Activated CD4-positive, alpha-beta T cell treated with anti-CD3 and anti-CD28 coated beads, Interleukin-2, amount 10 ng/mL, durations not matched to agents 24 days and 14 days (primary cell): ENCODE measurements at regions of chr15 and their contacts with region 1.

Region 1: GRCh38 chr15:60389261-60390077 is 8.3 kb downstream of the ANXA2 start:
- DNase-seq: peak; percentile 89
- H3K4me3 Mint-ChIP-seq: peak overlapping the region; percentile 37
- H3K27ac Mint-ChIP-seq: peak overlapping the region; percentile 51
- H3K4me1 Mint-ChIP-seq: peaks cover 64% of the 10 kb centered on the region
- H3K27me3 Mint-ChIP-seq: no peaks in the 10 kb centered on the region

Region 2: DNA sequence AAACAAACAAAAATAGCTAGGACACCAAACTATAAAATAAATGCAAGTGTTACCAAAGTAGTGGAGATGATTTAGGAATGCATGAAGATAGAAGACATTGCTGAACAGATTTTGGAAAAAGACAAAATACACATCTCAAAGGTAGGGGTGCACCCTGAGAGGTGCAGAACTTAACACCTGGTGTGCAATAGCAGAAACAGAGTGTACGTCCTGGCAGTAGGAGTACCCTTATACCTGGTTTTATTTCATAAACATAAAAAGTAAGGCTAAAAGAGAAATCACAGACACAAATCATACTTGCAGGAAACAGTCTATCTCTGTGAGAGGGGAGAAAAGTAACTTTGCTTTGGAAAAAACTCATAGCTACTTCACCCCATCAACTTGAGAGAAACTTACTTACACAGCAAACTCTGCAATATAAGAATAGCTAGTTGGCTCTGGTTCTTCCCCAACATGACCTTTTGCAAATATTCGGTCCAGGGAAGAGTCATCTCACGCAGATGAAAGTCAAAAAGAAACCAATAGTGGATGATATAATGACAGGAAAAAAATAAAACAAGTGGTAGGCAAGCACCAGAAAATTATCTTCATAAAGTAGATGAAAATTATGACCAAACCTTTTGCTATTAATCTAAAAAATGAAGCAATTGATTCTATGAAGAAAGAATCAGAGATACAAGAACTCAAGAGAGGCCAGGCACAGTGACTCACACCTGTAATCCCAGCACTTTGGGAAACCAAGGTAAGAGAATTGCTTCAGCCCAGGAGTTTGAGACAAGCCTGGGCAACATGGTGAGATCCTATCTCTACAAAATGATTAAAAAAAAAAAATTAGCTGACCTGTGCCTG is 591.5 kb before region 1 on chr15:
- intact Hi-C with region 1: loop called (anchors 1 kb)
- DNase-seq: peak; percentile 61
- H3K4me3 Mint-ChIP-seq: peak overlapping the region; percentile 47
- H3K27ac Mint-ChIP-seq: peak overlapping the region; percentile 67
- H3K4me1 Mint-ChIP-seq: peaks cover 46% of the 10 kb centered on the region
- H3K27me3 Mint-ChIP-seq: peaks cover 22% of the 10 kb centered on the region

Region 3: GRCh38 chr15:60370869-60371700 is 18.4 kb before region 1 on chr15:
- intact Hi-C with region 1: loop called (anchors 2 kb)
- DNase-seq: no peak
- H3K4me3 Mint-ChIP-seq: peak overlapping the region; percentile 41
- H3K27ac Mint-ChIP-seq: peak overlapping the region; percentile 97
- H3K4me1 Mint-ChIP-seq: peaks cover 26% of the 10 kb centered on the region
- H3K27me3 Mint-ChIP-seq: no peaks in the 10 kb centered on the region

Region 4: DNA sequence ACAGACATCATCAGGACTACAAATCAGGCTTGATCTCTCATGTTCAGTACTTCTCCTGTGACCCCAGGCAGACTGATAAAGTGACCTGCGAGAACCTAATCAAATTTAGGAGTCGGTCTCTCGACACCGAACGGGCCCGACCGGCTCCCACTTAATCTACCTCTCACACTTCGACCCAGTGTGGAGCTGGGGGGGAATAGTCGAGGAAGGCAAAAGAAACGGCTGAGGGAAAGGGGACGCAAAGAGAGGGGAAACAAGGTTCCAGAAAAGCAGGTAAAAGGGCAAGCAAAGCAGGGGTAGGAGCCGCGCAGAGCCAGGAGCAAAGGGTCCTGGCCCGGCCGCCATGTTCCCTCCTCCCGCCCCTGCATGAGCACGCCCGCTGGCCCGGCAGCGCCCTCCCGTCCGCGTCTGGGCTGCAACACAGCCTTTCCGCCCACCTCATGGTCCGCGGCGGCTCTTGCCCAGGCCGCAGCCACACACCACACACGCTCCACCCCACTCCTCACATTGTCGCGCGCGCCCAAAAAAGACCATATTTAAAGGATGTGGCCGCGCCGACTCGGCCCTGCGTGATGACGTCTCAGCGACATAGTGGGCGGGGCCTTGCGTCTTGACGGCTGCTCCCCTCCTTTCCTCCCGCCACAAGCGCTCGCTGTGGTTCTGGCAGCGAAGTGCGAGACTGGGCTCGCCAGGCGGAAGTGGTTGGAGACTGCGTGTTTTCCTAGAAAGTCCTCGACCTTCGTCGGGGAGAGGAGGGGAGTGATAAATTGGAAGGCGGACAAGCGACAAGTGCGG is 89.3 kb after region 1 on chr15 and contains the start of gene ICE2:
- intact Hi-C with region 1: loop called (anchors 2 kb)
- DNase-seq: peak; percentile 99
- H3K4me3 Mint-ChIP-seq: peak within 1 kb of the TSS; percentile 95
- H3K27ac Mint-ChIP-seq: peak within 1 kb of the TSS; percentile 99
- H3K4me1 Mint-ChIP-seq: peaks cover 37% of the 10 kb centered on the region
- H3K27me3 Mint-ChIP-seq: no peaks in the 10 kb centered on the region
- total RNA-seq, gene ICE2: 55.4 and 62.6 TPM in 2 replicates